ENCODE measurements at regions of chr6 and their contacts with region 1.

Region 1: DNA sequence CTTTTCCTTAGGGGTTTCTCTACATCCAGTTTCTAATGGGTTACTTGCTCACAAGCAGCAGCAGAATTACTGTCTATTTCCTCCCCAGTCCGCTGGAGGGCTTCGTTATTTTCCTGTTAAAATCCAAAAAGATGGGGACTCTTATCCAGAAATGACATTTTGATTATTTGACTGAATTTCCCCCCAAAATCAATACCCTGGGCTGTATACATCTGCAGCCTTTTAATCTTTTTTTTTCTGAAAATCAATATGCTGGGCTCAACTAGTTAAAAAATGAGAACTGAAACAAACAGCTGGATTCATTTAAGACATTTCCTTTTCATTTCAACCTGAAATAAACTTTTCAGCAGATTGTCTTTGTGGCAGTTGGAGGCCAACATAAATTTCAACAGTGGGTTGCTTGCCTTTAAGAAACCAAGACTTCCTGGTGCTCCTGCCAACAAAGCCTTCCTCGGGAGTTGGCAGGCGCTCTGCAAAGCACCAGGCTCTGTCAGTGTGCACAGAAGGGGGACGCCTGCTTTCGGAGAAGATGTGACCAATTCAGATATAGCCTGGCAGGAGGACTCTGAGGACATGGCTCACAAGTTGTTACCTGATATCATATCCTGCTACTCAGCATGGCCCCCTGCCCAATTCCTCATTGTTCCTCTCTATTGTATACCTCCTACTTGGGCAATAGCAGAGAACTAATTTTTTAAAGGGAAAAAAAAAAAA is 204.7 kb upstream of the ARG1 start:
- DNase-seq: peak; percentile 9
- ATAC-seq: peak; percentile 77
- H3K4me3 ChIP-seq: no peak overlapping the region
- H3K27ac ChIP-seq: no peak overlapping the region
- H3K4me1 ChIP-seq: peaks cover 4% of the 10 kb centered on the region
- H3K27me3 ChIP-seq: no peaks in the 10 kb centered on the region; a peak in 1 of 4 replicates
- CTCF ChIP-seq: no peak
- EP300 ChIP-seq: 0 out of 4 replicates have a peak, but pooled peaks of 1 of the 2 experiments have one; percentile 37
- POLR2A ChIP-seq: no peak
- RAD21 ChIP-seq: no peak

Region 2: GRCh38 chr6:130900913-130901312 is 467.4 kb before region 1 on chr6:
- CTCF ChIA-PET with region 1: no interaction called
- POLR2A ChIA-PET with region 1: no interaction called
- RAD21 ChIA-PET with region 1: no interaction called
- SMC1A ChIA-PET with region 1: no interaction called
- in situ Hi-C with region 1: no loop called
- intact Hi-C with region 1: loop called (anchors 10 kb)
- DNase-seq: no peak
- ATAC-seq: no peak
- H3K4me3 ChIP-seq: no peak overlapping the region
- H3K27ac ChIP-seq: no peak overlapping the region
- H3K4me1 ChIP-seq: no peaks in the 10 kb centered on the region
- H3K27me3 ChIP-seq: no peaks in the 10 kb centered on the region
- CTCF ChIP-seq: no peak
- EP300 ChIP-seq: no peak
- POLR2A ChIP-seq: no peak
- RAD21 ChIP-seq: no peak

Region 3: GRCh38 chr6:131182991-131183425 is 185.3 kb before region 1 on chr6:
- CTCF ChIA-PET with region 1: no interaction called
- POLR2A ChIA-PET with region 1: no interaction called
- RAD21 ChIA-PET with region 1: no interaction called
- SMC1A ChIA-PET with region 1: no interaction called
- in situ Hi-C with region 1: no loop called
- intact Hi-C with region 1: no loop called
- DNase-seq: no peak
- ATAC-seq: peak; percentile 66
- H3K4me3 ChIP-seq: no peak overlapping the region
- H3K27ac ChIP-seq: no peak overlapping the region
- H3K4me1 ChIP-seq: no peaks in the 10 kb centered on the region
- H3K27me3 ChIP-seq: no peaks in the 10 kb centered on the region
- CTCF ChIP-seq: peak; percentile 19 to 45 (median 27); a peak in 3 of 6 replicates
- EP300 ChIP-seq: no peak
- POLR2A ChIP-seq: no peak
- RAD21 ChIP-seq: peak; percentile 39